Caco-2 (cell line): ENCODE measurements at regions of chr16 and their contacts with region 1.

Region 1: GRCh38 chr16:23182460-23183309 is at the start of gene SCNN1G:
- DNase-seq: peak; percentile 85 to 95
- H3K4me3 ChIP-seq: peak within 1 kb of the TSS; percentile 31
- H3K4me3 Mint-ChIP-seq: peak within 1 kb of the TSS; percentile 66
- H3K27ac Mint-ChIP-seq: no peak within 1 kb of the TSS
- H3K4me1 ChIP-seq: peaks cover 6% of the 10 kb centered on the region; the same call in 1 of the 2 replicates
- H3K4me1 Mint-ChIP-seq: peaks cover 14% of the 10 kb centered on the region
- H3K27me3 ChIP-seq: peaks cover 5% of the 10 kb centered on the region; the same call in 1 of the 2 replicates
- H3K27me3 Mint-ChIP-seq: peaks cover 26% of the 10 kb centered on the region
- CTCF ChIP-seq: peak; percentile 78 to 90
- total RNA-seq, gene SCNN1G: not detected in 2 replicates

Region 2: GRCh38 chr16:23195366-23195978 is 12.8 kb after region 1 on chr16:
- CTCF ChIA-PET with region 1: interaction called, 5 read pairs
- POLR2A ChIA-PET with region 1: interaction called, 11 read pairs
- intact Hi-C with region 1: no loop called
- DNase-seq: no peak
- H3K4me3 ChIP-seq: no peak overlapping the region
- H3K4me3 Mint-ChIP-seq: no peak overlapping the region
- H3K27ac Mint-ChIP-seq: no peak overlapping the region
- H3K4me1 ChIP-seq: no peaks in the 10 kb centered on the region
- H3K4me1 Mint-ChIP-seq: no peaks in the 10 kb centered on the region
- H3K27me3 ChIP-seq: no peaks in the 10 kb centered on the region; the same call in 1 of the 2 replicates
- H3K27me3 Mint-ChIP-seq: peaks cover 7% of the 10 kb centered on the region
- CTCF ChIP-seq: no peak

Region 3: DNA sequence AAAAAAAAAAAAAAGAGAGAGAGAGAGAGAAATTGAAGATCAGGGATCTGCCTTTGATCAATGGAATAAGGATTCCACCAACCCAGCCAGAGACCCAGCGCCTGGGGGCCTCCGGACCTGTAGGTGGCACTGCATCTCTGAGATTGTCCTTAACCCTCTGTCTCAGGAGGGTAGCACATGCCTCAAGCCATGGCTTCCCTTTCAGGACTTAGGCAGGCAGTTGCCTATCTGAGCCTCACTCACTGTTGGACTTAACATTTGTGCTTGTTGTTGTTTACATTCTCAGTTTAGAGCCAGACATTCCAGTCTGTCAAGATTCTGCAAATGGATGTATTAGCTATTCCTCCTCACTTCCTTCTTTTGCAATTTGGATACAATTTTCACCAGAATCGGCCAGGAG is 114.3 kb after region 1 on chr16:
- CTCF ChIA-PET with region 1: no interaction called
- POLR2A ChIA-PET with region 1: no interaction called
- intact Hi-C with region 1: loop called (anchors 10 kb)
- DNase-seq: peak in 1 of 2 experiments; percentile 54
- H3K4me3 ChIP-seq: no peak overlapping the region
- H3K4me3 Mint-ChIP-seq: no peak overlapping the region
- H3K27ac Mint-ChIP-seq: no peak overlapping the region
- H3K4me1 ChIP-seq: no peaks in the 10 kb centered on the region
- H3K4me1 Mint-ChIP-seq: no peaks in the 10 kb centered on the region
- H3K27me3 ChIP-seq: no peaks in the 10 kb centered on the region
- H3K27me3 Mint-ChIP-seq: peaks cover 12% of the 10 kb centered on the region
- CTCF ChIP-seq: peak in 1 of 2 experiments; percentile 14